ENCODE measurements at regions of chr7 and their contacts with region 1.

Region 1: GRCh38 chr7:111089822-111090426 is 1.0 kb upstream of the LRRN3 start:
- DNase-seq: no peak

Region 2: GRCh38 chr7:110994028-110994967 is 95.6 kb before region 1 on chr7:
- intact Hi-C with region 1: no loop called
- DNase-seq: no peak

Region 3: GRCh38 chr7:111059833-111060232 is 30.1 kb before region 1 on chr7:
- intact Hi-C with region 1: no loop called
- DNase-seq: no peak

Region 4: GRCh38 chr7:111147708-111148533 is 58.0 kb after region 1 on chr7:
- intact Hi-C with region 1: no loop called
- DNase-seq: no peak

Region 5: DNA sequence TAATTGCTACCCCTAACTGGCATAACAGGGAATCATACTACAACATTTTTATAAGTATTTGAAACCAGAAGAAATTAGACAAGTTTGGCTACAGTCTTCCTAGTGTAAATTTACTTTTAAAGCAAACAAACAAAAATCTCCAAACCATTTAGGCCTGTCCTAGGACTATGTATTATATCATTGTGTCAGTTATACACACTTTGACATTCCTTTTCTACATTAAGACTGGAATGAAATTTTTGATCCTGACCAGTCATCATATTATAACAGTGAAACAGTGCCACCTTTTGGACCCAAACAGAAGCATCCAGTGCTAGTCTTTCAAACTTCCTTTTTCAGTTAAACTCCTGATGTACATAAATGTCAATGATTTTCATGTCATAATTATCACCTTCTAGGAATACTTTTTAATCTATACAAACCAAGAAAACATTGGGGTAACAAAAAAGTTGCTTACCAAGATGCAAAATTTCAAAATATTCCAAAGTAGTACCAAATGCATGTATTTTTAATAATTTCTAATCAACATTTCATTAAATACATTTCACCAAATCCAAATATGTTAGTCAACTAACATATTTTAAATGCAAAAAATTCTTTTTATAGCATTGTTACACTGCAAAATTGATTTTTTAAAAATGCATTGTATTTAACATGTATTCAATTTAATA is 396.7 kb after region 1 on chr7:
- intact Hi-C with region 1: loop called (anchors 2 kb)
- DNase-seq: no peak

Region 6: GRCh38 chr7:111735661-111736551 is 646.0 kb after region 1 on chr7:
- intact Hi-C with region 1: loop called (anchors 5 kb)
- DNase-seq: peak in 4 of 10 donors; percentile 33 to 65 (median 54)